Heart right ventricle (tissue), 16 donors: ENCODE measurements at regions of chr9 and their contacts with region 1.

Region 1: DNA sequence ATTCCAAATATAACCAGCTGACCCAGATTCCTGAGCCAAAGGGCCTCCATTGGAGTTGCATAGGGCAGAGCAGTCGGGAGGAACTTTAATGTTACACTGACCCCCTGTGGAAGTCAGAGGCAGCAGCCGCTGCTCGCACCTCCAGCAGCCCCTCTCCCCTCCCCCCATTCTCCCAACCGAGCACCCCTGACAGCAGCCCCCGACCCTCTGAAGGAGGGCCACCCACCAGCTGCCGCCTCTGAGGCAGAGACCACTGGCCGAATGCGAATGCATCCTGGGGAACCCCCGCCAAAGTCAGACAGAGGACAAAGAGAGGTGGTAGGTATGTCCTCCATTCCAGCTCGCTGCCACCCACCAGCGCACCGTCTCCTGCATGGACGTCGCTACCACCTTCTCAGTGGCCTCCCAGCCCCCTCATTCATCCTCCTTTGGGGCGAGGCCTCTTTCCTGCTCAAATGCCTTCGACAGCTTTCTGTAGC is 231.0 kb downstream of the CDK5RAP2 start:
- DNase-seq: peak; percentile 15 to 25
- ATAC-seq: peak; percentile 51 to 88 (median 75)
- H3K4me3 ChIP-seq: no peak overlapping the region
- H3K27ac ChIP-seq: no peak overlapping the region
- H3K4me1 ChIP-seq: no peaks in the 10 kb centered on the region
- H3K27me3 ChIP-seq: no peaks in the 10 kb centered on the region
- CTCF ChIP-seq: peak in 8 of 9 donors; percentile 36 to 67 (median 59)

Region 2: DNA sequence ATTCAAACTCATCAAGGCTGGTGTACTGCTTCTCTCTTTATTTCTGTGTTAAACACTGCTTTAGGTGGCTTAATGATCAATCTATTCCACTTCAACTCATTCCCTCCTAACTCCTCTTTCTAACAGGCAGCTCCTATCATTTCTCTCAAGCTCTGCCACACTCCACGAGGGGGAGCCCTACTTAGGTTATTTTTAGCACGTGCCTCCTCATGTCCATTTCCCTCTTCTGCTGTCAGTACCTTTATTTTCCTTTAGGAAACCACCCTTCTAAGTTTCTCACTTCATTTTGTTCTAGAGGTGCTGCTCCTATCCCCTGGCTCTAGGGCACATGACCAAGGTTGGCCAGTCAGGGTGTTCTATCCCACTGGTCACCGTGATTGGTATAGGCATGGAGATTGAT is 973.1 kb before region 1 on chr9:
- intact Hi-C with region 1: loop called in 1 of 10 experiments (anchors 10 kb)
- DNase-seq: no peak
- ATAC-seq: no peak
- H3K4me3 ChIP-seq: no peak overlapping the region
- H3K27ac ChIP-seq: no peak overlapping the region
- H3K4me1 ChIP-seq: no peaks in the 10 kb centered on the region
- H3K27me3 ChIP-seq: peaks cover 0 to 30% (median 4%) of the 10 kb centered on the region in 7 donors
- CTCF ChIP-seq: peak in 5 of 9 donors; percentile 9 to 37 (median 28)

Region 3: DNA sequence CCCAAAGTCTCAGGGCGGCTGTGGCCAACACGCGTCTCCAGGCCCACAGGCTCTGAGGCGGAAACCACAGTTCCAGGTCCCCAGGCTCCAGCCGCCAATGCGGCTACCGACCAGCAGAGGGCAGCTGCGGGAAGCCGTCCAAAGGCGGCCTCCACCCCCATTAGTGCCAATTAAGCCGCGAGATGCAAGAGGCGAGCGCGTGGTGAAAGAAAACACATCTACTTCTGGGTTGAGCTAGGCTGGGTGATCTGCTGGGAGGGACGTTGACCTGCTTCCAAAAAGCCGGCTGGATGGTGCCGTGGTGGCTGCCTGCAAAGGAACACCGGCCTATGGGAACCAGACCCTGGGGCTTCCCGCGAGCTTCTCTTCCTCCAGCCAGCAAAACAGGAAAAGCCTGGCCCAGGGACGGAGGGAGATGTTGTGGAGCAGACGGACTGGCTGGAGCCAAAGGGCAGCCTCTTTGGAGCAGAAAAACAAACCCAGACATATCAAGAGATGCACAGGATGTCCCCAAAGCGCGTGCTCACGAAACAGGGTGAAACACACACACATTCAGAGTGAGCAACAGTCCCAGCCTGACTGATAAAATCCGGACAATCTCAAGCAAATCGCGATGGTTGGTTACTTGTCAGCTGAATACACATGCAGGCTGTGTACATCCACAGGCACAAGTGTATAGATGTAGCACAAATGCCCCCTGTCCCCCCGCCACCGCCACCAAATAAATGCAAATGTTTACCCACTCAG is 792.7 kb before region 1 on chr9:
- intact Hi-C with region 1: loop called in 8 of 10 experiments (anchors 2 to 10 kb)
- DNase-seq: peak; percentile 61 to 80
- ATAC-seq: peak; percentile 79 to 95 (median 88)
- H3K4me3 ChIP-seq: peak overlapping the region in 9 of 10 donors; percentile 2 to 47 (median 42)
- H3K27ac ChIP-seq: peak overlapping the region in 3 of 10 donors; percentile 2 to 28 (median 9)
- H3K4me1 ChIP-seq: peaks cover 0 to 10% (median 6%) of the 10 kb centered on the region in 9 donors
- H3K27me3 ChIP-seq: peaks cover 0 to 38% (median 9%) of the 10 kb centered on the region in 7 donors
- CTCF ChIP-seq: peak; percentile 72 to 96 (median 92)

Region 4: DNA sequence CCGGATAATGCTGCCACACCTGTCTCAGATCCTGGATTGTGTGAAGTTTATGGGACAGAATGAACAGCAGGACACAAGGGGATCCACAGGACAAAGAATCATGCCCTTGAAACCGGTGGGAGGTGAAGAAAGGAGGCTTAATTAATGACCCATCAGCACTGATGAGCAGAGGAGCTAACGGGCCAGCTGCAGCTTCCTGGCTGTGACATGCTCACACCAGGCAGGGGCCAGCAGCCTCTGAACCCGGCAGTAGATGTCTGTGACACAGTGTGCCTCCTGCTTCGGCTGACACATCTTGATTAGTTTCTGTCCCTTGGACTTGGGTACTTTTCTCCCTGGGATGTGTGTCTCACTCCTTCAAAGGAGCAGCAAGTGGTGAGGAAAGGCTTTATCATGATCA is 651.0 kb before region 1 on chr9:
- intact Hi-C with region 1: no loop called
- DNase-seq: no peak
- ATAC-seq: no peak
- H3K4me3 ChIP-seq: no peak overlapping the region
- H3K27ac ChIP-seq: no peak overlapping the region
- H3K4me1 ChIP-seq: no peaks in the 10 kb centered on the region
- H3K27me3 ChIP-seq: peaks cover 0 to 9% (median 0%) of the 10 kb centered on the region in 7 donors
- CTCF ChIP-seq: no peak

Region 5: DNA sequence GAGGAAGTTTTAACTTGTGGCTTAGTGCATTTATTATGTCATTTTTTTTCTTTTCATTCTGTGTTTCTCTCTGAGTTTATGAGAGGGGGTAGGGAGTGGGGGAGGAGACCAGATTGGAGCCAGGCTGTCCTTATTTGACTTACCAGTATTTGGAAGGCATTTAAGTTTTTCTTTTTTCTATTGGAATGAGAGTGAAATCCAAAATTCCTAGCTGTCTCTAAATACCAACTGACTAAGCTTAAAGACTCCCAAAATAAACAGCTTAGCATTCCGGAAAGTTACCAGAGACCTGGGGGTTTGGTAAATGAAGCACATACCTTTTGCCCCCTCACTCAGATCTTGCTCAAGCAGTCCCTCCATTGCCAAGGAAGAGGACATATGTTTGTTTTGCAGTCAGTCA is 397.9 kb before region 1 on chr9:
- intact Hi-C with region 1: loop called in 1 of 10 experiments (anchors 10 kb)
- DNase-seq: no peak
- ATAC-seq: peak in 7 of 8 donors; percentile 53 to 84 (median 68)
- H3K4me3 ChIP-seq: no peak overlapping the region
- H3K27ac ChIP-seq: peak overlapping the region in 3 of 10 donors; percentile 19 to 72 (median 39)
- H3K4me1 ChIP-seq: peaks cover 0 to 9% (median 0%) of the 10 kb centered on the region in 9 donors
- H3K27me3 ChIP-seq: peaks cover 0 to 4% (median 0%) of the 10 kb centered on the region in 7 donors
- CTCF ChIP-seq: no peak

Region 6: GRCh38 chr9:119968836-119969707 is 379.9 kb before region 1 on chr9:
- intact Hi-C with region 1: loop called in 1 of 10 experiments (anchors 5 kb)
- DNase-seq: peak; percentile 68 to 73
- ATAC-seq: peak; percentile 75 to 92 (median 86)
- H3K4me3 ChIP-seq: no peak overlapping the region
- H3K27ac ChIP-seq: no peak overlapping the region
- H3K4me1 ChIP-seq: peaks cover 0 to 10% (median 1%) of the 10 kb centered on the region in 9 donors
- H3K27me3 ChIP-seq: peaks cover 0 to 12% (median 0%) of the 10 kb centered on the region in 7 donors
- CTCF ChIP-seq: peak; percentile 80 to 93 (median 91)

Region 7: GRCh38 chr9:120402741-120403542 is 54.0 kb after region 1 on chr9:
- intact Hi-C with region 1: loop called in 1 of 10 experiments (anchors 10 kb)
- DNase-seq: no peak
- ATAC-seq: peak in 1 of 8 donors; percentile 51
- H3K4me3 ChIP-seq: no peak overlapping the region
- H3K27ac ChIP-seq: peak overlapping the region in 1 of 10 donors; percentile 80
- H3K4me1 ChIP-seq: peaks cover 0 to 22% (median 0%) of the 10 kb centered on the region in 9 donors
- H3K27me3 ChIP-seq: no peaks in the 10 kb centered on the region
- CTCF ChIP-seq: no peak